Thyroid gland (tissue), 4 donors: ENCODE measurements at regions of chr7 and their contacts with region 1.

Region 1: GRCh38 chr7:117385340-117386109 is 41.8 kb downstream of the ASZ1 start:
- DNase-seq: no peak
- H3K4me3 ChIP-seq: no peak overlapping the region
- H3K27ac ChIP-seq: no peak overlapping the region
- H3K4me1 ChIP-seq: no peaks in the 10 kb centered on the region
- H3K27me3 ChIP-seq: no peaks in the 10 kb centered on the region
- CTCF ChIP-seq: peak in 4 of 6 experiments; percentile 19 to 49 (median 34)
- POLR2A ChIP-seq: no peak

Region 2: DNA sequence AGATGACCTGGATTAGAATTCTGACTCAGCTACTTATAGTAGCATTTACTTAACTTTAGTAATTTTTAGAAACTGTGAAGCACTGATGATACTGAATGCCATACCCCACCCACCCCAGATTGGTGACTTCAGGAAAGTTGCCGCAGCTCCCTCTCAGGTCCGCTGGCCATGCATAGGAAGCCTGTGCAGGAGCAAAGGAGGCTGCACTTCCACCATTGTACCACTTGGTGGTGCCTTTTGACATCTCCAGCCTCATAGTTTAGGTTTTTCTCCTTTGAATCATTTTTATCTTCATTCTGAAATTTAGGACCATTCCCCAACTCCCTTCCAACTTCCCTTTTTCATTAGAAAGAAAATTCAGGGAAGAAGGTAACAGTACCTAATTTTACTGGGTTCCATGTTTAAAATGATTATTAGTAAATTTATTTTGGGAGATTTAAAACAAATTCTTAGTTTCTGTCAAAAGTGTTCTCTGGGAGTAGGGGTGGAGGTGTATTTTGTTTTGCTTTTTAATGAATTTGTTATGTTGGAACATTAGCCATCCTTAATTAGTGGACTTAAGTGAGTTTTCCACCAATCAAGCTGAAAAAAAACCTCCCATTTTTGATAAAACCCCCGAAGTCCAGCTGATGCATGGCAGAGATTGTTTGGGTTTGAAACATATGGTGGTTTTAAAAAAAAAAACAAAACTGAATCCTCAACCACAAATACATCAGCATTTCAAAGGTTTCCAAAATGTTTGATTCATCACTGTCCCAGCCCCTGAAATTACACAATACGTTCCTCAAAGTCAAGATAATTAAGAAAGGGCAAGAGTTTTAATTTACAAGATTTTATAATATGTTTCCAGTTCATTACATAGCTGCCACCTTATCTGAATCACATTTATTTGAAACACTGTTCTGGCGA is 172.3 kb before region 1 on chr7:
- intact Hi-C with region 1: loop called (anchors 10 kb)
- DNase-seq: peak; percentile 56 to 57
- H3K4me3 ChIP-seq: no peak overlapping the region
- H3K27ac ChIP-seq: no peak overlapping the region
- H3K4me1 ChIP-seq: no peaks in the 10 kb centered on the region
- H3K27me3 ChIP-seq: no peaks in the 10 kb centered on the region
- CTCF ChIP-seq: peak; percentile 57 to 91 (median 62)
- POLR2A ChIP-seq: no peak

Region 3: GRCh38 chr7:117448655-117449054 is 63.1 kb after region 1 on chr7:
- intact Hi-C with region 1: no loop called
- DNase-seq: no peak
- H3K4me3 ChIP-seq: no peak overlapping the region
- H3K27ac ChIP-seq: no peak overlapping the region
- H3K4me1 ChIP-seq: no peaks in the 10 kb centered on the region
- H3K27me3 ChIP-seq: no peaks in the 10 kb centered on the region
- CTCF ChIP-seq: no peak
- POLR2A ChIP-seq: no peak